ENCODE measurements at regions of chr2 and their contacts with region 1.

Region 1: DNA sequence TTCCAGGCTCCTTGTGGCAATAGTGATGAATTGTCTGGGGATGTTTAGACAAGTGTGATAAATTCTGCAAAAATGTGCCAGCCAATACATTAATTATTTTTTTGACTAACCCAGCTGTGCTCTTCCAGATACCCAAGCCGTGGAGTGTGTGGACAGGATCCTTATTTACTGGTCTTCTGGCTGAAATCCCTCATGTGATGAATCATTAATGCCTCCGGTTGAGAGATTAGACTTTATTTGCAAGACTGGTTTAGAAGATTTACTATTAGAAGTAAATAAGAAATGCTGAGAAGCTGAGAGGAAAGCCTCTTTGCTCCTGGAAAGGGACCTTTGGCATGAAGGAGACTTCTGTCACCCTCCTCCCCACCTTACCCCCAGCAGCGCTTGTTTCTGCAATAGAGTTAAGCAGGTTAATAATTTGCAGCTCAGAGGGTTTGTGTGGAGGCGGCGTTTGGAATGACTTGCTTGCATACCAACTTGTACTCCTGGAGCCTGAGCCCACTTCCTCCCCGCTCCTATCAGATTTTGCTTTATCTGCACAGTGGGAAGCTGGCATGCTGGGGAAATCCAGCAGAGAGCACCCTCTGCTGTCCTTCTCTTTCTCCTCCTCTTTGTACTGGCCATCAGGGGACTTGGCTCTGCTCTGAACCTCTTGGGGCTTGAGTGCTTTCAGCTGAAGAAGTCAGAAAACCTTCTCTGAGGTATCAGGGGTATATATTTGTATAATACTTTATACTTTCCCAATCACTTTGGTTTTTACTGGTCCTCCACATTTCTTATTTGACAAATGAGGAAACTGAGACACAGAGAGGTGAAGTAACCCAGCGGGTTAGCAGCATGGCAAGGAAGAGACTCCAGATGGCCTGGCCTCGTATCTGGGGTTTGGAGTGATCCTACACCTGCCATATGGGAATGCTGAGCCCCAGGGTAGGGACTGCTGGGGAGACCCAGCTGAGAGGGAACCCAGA is 16.3 kb downstream of the SLC3A1 start:
- DNase-seq: peak in 1 of 2 donors; percentile 78
- H3K4me3 ChIP-seq: peak overlapping the region in 1 of 2 donors; percentile 16
- H3K27ac ChIP-seq: peak overlapping the region; percentile 19 to 61
- H3K4me1 ChIP-seq: peaks cover 0 to 34% of the 10 kb centered on the region in 2 donors
- H3K27me3 ChIP-seq: no peaks in the 10 kb centered on the region
- CTCF ChIP-seq: peak; percentile 46 to 70 (median 50)

Region 2: DNA sequence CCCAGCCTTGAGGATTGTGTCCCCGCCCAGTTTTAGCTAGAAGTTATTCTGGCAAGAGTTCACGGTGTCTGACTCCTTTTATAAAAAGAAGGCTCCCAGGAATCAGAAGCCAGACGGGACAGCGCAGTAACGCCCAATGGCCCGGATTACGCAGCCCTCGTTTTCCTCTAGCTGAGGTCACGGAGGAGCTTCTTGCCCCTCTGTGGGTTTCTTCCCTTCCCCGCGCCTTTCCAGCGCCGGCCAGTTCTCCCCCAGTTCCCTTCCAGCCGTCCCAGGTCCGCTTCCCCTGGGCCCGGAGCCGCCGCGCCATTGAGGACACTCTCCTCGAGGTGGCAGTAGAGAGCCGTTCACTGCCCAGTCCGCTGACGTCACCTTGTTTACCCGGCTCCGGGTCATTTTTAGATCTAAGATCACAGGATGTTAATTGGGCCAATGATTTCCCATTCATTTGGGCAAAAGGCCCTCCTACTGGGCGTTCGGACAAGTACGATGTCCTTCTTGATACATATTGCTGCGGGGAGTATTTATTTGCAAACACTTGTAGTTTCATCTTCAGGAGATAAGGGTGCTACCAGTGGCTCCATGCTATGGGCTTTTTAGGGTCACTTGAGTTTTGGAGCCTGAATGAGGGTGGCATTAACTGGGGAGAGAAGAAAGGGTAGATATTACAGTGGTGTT is 204.4 kb before region 1 on chr2:
- intact Hi-C with region 1: loop called (anchors 1 kb)
- DNase-seq: peak; percentile 49 to 92
- H3K4me3 ChIP-seq: peak overlapping the region; percentile 18 to 60
- H3K27ac ChIP-seq: peak overlapping the region; percentile 66 to 70
- H3K4me1 ChIP-seq: peaks cover 0 to 11% of the 10 kb centered on the region in 2 donors
- H3K27me3 ChIP-seq: no peaks in the 10 kb centered on the region
- CTCF ChIP-seq: peak; percentile 90 to 97 (median 96)

Region 3: GRCh38 chr2:44267796-44268648 is 23.5 kb before region 1 on chr2:
- intact Hi-C with region 1: loop called (anchors 1 kb)
- DNase-seq: peak; percentile 14 to 88
- H3K4me3 ChIP-seq: no peak overlapping the region
- H3K27ac ChIP-seq: peak overlapping the region; percentile 81 to 92
- H3K4me1 ChIP-seq: peaks cover 9 to 42% of the 10 kb centered on the region in 2 donors
- H3K27me3 ChIP-seq: no peaks in the 10 kb centered on the region
- CTCF ChIP-seq: no peak